Heart left ventricle (tissue), 16 donors: ENCODE measurements at regions of chr7 and their contacts with region 1.

Region 1: GRCh38 chr7:90749262-90749661 is 153.1 kb downstream of the CDK14 start:
- DNase-seq: no peak
- ATAC-seq: no peak
- H3K4me3 ChIP-seq: no peak overlapping the region
- H3K27ac ChIP-seq: no peak overlapping the region
- H3K4me1 ChIP-seq: peaks cover 0 to 5% (median 0%) of the 10 kb centered on the region in 12 donors
- H3K27me3 ChIP-seq: no peaks in the 10 kb centered on the region
- CTCF ChIP-seq: no peak
- POLR2A ChIP-seq: no peak

Region 2: GRCh38 chr7:90455163-90456030 is 293.9 kb before region 1 on chr7:
- intact Hi-C with region 1: loop called in 1 of 10 experiments (anchors 10 kb)
- DNase-seq: no peak
- ATAC-seq: peak in 3 of 4 donors; percentile 65 to 75 (median 68)
- H3K4me3 ChIP-seq: peak overlapping the region in 6 of 12 donors; percentile 7 to 35 (median 24)
- H3K27ac ChIP-seq: no peak overlapping the region
- H3K4me1 ChIP-seq: peaks cover 0 to 8% (median 2%) of the 10 kb centered on the region in 12 donors
- H3K27me3 ChIP-seq: no peaks in the 10 kb centered on the region
- CTCF ChIP-seq: peak; percentile 42 to 82 (median 66)
- POLR2A ChIP-seq: no peak

Region 3: GRCh38 chr7:90666186-90666585 is 83.1 kb before region 1 on chr7:
- intact Hi-C with region 1: no loop called
- DNase-seq: peak in 1 of 5 donors; percentile 35
- ATAC-seq: no peak
- H3K4me3 ChIP-seq: no peak overlapping the region
- H3K27ac ChIP-seq: peak overlapping the region in 2 of 12 donors; percentile 3 to 44
- H3K4me1 ChIP-seq: peaks cover 0 to 45% (median 12%) of the 10 kb centered on the region in 12 donors
- H3K27me3 ChIP-seq: no peaks in the 10 kb centered on the region
- CTCF ChIP-seq: no peak
- POLR2A ChIP-seq: no peak